ENCODE measurements at regions of chr17 and their contacts with region 1.

Region 1: GRCh38 chr17:41918314-41919164 is at the start of gene ACLY:
- DNase-seq: peak; percentile 96
- H3K4me3 ChIP-seq: peak within 1 kb of the TSS; percentile 41 to 88 (median 85)
- H3K27ac ChIP-seq: peak within 1 kb of the TSS; percentile 76
- H3K4me1 ChIP-seq: peaks cover 20% of the 10 kb centered on the region
- H3K27me3 ChIP-seq: no peaks in the 10 kb centered on the region
- CTCF ChIP-seq: no peak
- POLR2A ChIP-seq: peak; percentile 97
- total RNA-seq, gene ACLY: 324 and 329 TPM in 2 replicates

Region 2: GRCh38 chr17:41930009-41930832 is 11.7 kb after region 1 on chr17 and contains the start of gene ODAD4:
- CTCF ChIA-PET with region 1: interaction called, 22 read pairs
- POLR2A ChIA-PET with region 1: interaction called, 6 read pairs
- dilution Hi-C with region 1: no loop called
- intact Hi-C with region 1: loop called (anchors 1 kb)
- DNase-seq: peak; percentile 99
- H3K4me3 ChIP-seq: peak within 1 kb of the TSS in 2 of 3 experiments; percentile 25 to 51
- H3K27ac ChIP-seq: peak within 1 kb of the TSS; percentile 50
- H3K4me1 ChIP-seq: peaks cover 8% of the 10 kb centered on the region
- H3K27me3 ChIP-seq: peaks cover 0 to 3% of the 10 kb centered on the region in 2 experiments
- CTCF ChIP-seq: peak; percentile 44 to 59
- POLR2A ChIP-seq: peak; percentile 84
- total RNA-seq, gene ODAD4: 0.60 and 1.0 TPM in 2 replicates

Region 3: GRCh38 chr17:42087736-42088705 is 169.5 kb after region 1 on chr17:
- CTCF ChIA-PET with region 1: no interaction called
- POLR2A ChIA-PET with region 1: no interaction called
- dilution Hi-C with region 1: no loop called
- intact Hi-C with region 1: no loop called
- DNase-seq: no peak
- H3K4me3 ChIP-seq: no peak overlapping the region
- H3K27ac ChIP-seq: no peak overlapping the region
- H3K4me1 ChIP-seq: no peaks in the 10 kb centered on the region
- H3K27me3 ChIP-seq: peaks cover 11 to 13% of the 10 kb centered on the region in 2 experiments
- CTCF ChIP-seq: no peak
- POLR2A ChIP-seq: no peak